Ovary (tissue), 10 donors: ENCODE measurements at regions of chrX and their contacts with region 1.

Region 1: GRCh38 chrX:106177106-106177981 is 9.2 kb downstream of the PWWP3B start:
- DNase-seq: peak; percentile 77 to 89 (median 84)
- H3K4me3 ChIP-seq: peak overlapping the region; percentile 3
- H3K27ac ChIP-seq: peak overlapping the region in 1 of 2 donors; percentile 46
- H3K4me1 ChIP-seq: no peaks in the 10 kb centered on the region
- H3K27me3 ChIP-seq: no peaks in the 10 kb centered on the region
- CTCF ChIP-seq: no peak
- EP300 ChIP-seq: no peak
- POLR2A ChIP-seq: no peak

Region 2: GRCh38 chrX:106144755-106145639 is 32.3 kb before region 1 on chrX:
- intact Hi-C with region 1: loop called in 1 of 4 experiments (anchors 1 kb)
- DNase-seq: peak in 4 of 5 donors; percentile 27 to 69 (median 50)
- H3K4me3 ChIP-seq: no peak overlapping the region
- H3K27ac ChIP-seq: no peak overlapping the region
- H3K4me1 ChIP-seq: no peaks in the 10 kb centered on the region
- H3K27me3 ChIP-seq: no peaks in the 10 kb centered on the region
- CTCF ChIP-seq: no peak
- EP300 ChIP-seq: no peak
- POLR2A ChIP-seq: no peak

Region 3: DNA sequence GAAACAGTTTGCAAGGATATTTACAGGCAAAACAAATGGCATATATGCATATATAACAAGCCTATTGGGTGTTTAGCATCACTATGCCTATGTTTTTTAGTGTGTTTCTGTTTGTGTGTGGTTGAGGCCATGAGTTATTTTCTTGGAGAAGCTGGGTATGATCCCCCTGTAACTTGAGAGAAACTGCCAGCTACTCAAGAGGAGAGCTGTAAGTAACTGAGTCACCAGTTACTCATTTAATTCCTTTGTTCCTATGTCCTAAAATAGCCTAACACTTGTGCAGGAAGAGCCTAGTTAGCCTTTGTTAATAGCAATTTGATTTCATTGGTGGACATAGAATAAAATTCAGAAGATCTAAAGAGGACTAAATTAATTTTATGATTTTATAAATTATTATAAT is 69.8 kb after region 1 on chrX:
- intact Hi-C with region 1: loop called in 1 of 4 experiments (anchors 5 kb)
- DNase-seq: no peak
- H3K4me3 ChIP-seq: no peak overlapping the region
- H3K27ac ChIP-seq: no peak overlapping the region
- H3K4me1 ChIP-seq: no peaks in the 10 kb centered on the region
- H3K27me3 ChIP-seq: no peaks in the 10 kb centered on the region
- CTCF ChIP-seq: no peak
- EP300 ChIP-seq: no peak
- POLR2A ChIP-seq: no peak